CD4-positive, alpha-beta memory T cell (primary cell): ENCODE measurements at regions of chr19 and their contacts with region 1.

Region 1: GRCh38 chr19:39941615-39942365 is 7.4 kb upstream of the FCGBP start:
- DNase-seq: peak; percentile 80 to 88 (median 84)
- H3K4me3 ChIP-seq: peak overlapping the region; percentile 36 to 53
- H3K4me3 Mint-ChIP-seq: peak overlapping the region; percentile 71 to 87 (median 80)
- H3K27ac ChIP-seq: peak overlapping the region; percentile 77
- H3K27ac Mint-ChIP-seq: peak overlapping the region; percentile 83 to 97 (median 92)
- H3K4me1 ChIP-seq: peaks cover 80% of the 10 kb centered on the region
- H3K4me1 Mint-ChIP-seq: peaks cover 50 to 89% (median 69%) of the 10 kb centered on the region in 4 donors
- H3K27me3 ChIP-seq: no peaks in the 10 kb centered on the region
- H3K27me3 Mint-ChIP-seq: no peaks in the 10 kb centered on the region

Region 2: DNA sequence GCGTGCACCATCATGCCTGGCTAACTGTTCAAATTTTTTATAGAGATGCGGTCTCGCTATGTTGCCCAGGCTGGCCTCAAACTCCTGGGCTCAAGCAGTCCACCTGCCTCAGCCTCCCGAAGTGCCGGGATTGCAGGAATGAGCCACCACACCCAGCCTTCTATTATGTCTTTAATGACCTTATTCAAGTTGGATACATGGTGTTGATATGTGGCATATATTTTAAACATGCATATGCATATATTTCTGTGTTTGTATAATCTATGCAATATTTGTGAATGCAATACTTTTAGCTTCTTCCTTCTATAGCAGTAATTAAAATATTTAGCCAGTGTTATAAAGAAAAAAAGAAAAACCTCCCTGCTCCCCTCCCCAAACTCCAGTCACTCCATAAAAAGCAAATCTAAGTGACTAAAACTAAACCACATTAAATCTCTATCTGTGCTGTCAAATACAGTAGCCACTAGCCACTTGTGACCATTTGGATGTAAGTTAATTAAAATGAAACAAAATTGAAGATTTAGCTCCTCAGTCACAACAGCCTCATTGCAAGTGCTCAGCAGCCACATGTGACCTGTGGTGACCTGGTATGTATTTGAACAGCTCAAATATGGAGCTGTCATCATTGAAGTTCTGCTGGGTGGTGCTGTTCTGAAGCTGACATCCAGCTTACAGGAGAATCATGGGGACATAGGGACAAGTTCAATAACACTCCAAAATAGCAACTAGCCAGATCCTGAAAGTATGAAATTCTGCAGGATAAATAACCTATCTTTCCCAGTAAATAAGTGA is 34.8 kb before region 1 on chr19:
- CTCF ChIA-PET with region 1: no interaction called
- POLR2A ChIA-PET with region 1: no interaction called
- intact Hi-C with region 1: loop called (anchors 5 kb)
- DNase-seq: no peak
- H3K4me3 ChIP-seq: no peak overlapping the region
- H3K4me3 Mint-ChIP-seq: no peak overlapping the region
- H3K27ac ChIP-seq: no peak overlapping the region
- H3K27ac Mint-ChIP-seq: peak overlapping the region in 4 of 7 donors; percentile 9 to 56 (median 38)
- H3K4me1 ChIP-seq: no peaks in the 10 kb centered on the region
- H3K4me1 Mint-ChIP-seq: peaks cover 8 to 14% (median 11%) of the 10 kb centered on the region in 4 donors
- H3K27me3 ChIP-seq: no peaks in the 10 kb centered on the region
- H3K27me3 Mint-ChIP-seq: no peaks in the 10 kb centered on the region